Prostate gland (tissue), 2 donors: ENCODE measurements at regions of chr2 and their contacts with region 1.

Region 1: GRCh38 chr2:23760736-23761135 is 166.2 kb downstream of the ATAD2B start:
- DNase-seq: no peak
- H3K4me3 ChIP-seq: no peak overlapping the region
- H3K27ac ChIP-seq: no peak overlapping the region
- H3K4me1 ChIP-seq: no peaks in the 10 kb centered on the region
- H3K27me3 ChIP-seq: no peaks in the 10 kb centered on the region
- CTCF ChIP-seq: peak in 3 of 4 experiments; percentile 19 to 48 (median 40)
- POLR2A ChIP-seq: no peak

Region 2: GRCh38 chr2:22842205-22842860 is 918.4 kb before region 1 on chr2:
- intact Hi-C with region 1: no loop called
- DNase-seq: no peak
- H3K4me3 ChIP-seq: no peak overlapping the region
- H3K27ac ChIP-seq: no peak overlapping the region
- H3K4me1 ChIP-seq: no peaks in the 10 kb centered on the region
- H3K27me3 ChIP-seq: no peaks in the 10 kb centered on the region
- CTCF ChIP-seq: no peak
- POLR2A ChIP-seq: no peak

Region 3: DNA sequence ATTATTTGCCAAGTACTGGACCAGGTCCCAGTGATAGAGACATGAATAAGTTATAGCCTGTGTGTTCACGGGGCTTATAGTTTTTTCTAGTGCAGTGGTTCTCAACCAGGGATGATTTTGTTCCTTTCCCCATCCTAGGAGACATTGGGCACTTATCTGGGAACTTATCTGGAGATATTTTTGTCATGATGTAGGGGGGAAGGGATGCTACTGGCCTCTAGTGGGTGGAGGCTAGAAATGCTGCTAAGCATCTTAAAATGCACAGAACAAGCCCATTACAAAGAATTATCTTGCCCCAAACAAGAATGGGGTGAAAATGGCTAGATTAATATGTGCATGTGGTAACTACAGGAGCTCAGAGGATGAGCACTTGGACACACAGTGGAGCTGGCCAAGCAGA is 300.5 kb before region 1 on chr2:
- intact Hi-C with region 1: no loop called
- DNase-seq: no peak
- H3K4me3 ChIP-seq: no peak overlapping the region
- H3K27ac ChIP-seq: no peak overlapping the region
- H3K4me1 ChIP-seq: no peaks in the 10 kb centered on the region
- H3K27me3 ChIP-seq: no peaks in the 10 kb centered on the region
- CTCF ChIP-seq: peak in 1 of 4 experiments; percentile 21
- POLR2A ChIP-seq: no peak

Region 4: DNA sequence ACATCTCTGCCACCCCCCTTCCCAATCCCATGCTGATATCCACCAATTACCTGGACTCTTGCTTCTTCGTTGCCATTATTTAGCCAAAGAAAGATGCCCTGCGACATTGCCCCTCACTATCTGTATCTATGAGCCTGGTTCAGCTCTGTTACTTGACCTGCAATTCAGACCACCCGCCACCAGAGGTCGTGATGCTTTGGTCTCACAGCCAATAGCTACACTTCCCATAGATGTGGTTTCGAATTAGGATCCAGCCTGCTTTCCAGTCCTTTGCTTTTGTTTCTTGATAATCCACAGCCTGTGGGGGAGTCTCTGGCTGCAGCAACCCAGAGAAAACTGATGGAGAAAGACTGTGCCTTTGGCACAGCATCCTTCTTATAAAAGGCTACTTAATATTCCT is 136.4 kb before region 1 on chr2:
- intact Hi-C with region 1: loop called (anchors 10 kb)
- DNase-seq: no peak
- H3K4me3 ChIP-seq: no peak overlapping the region
- H3K27ac ChIP-seq: no peak overlapping the region
- H3K4me1 ChIP-seq: no peaks in the 10 kb centered on the region
- H3K27me3 ChIP-seq: no peaks in the 10 kb centered on the region
- CTCF ChIP-seq: no peak
- POLR2A ChIP-seq: no peak

Region 5: GRCh38 chr2:24105816-24106215 is 345.1 kb after region 1 on chr2:
- intact Hi-C with region 1: no loop called
- DNase-seq: no peak
- H3K4me3 ChIP-seq: no peak overlapping the region
- H3K27ac ChIP-seq: no peak overlapping the region
- H3K4me1 ChIP-seq: no peaks in the 10 kb centered on the region
- H3K27me3 ChIP-seq: no peaks in the 10 kb centered on the region
- CTCF ChIP-seq: no peak
- POLR2A ChIP-seq: no peak